ENCODE measurements at regions of chr6 and their contacts with region 1.

Region 1: DNA sequence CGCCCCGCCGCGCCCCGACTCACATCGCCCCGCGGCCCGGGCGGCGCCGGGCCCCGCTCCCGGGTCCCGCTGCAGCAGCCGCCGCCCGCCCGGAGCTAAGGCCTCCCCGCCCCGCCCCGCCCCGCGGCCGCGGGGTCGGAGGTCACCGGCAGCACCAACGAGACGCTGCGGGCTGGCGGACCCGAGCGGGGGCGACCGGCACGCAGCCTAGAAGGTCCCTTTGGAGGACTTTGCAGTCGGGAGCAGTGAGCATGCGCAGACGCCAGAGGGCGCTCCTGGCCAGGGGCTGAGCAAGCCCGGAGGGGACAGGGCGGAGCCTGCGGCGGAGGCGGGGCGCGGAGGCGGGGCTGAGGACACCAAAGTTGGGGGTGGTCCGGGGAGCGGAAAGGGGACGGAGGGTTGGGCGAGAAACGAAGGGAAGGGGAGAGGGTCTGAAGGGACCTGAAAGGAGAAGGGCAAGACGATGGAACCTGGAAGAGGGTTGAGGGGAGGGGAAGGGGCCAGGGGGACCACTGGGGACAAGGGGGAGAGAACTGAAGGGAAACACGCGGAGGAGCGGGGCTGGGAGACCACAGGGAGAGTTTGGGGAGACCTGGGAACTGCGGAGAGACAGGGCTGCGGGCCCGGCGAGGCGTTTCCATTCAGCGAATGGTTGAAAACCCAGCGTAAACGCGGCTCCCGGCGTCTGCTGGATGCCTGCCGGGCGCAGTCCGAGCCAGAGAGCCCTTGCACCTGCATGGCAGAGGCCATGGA is at the start of gene FRS3:
- DNase-seq: peak; percentile 99 to 100
- ATAC-seq: peak; percentile 97 to 98 (median 98)
- H3K4me3 ChIP-seq: peak within 1 kb of the TSS; percentile 91
- H3K27ac ChIP-seq: peak within 1 kb of the TSS; percentile 75
- H3K4me1 ChIP-seq: peaks cover 10% of the 10 kb centered on the region
- H3K27me3 ChIP-seq: no peaks in the 10 kb centered on the region
- CTCF ChIP-seq: peak; percentile 87
- total RNA-seq, gene FRS3: 4.0 to 6.5 (median 5.4) TPM

Region 2: GRCh38 chr6:41367700-41368099 is 412.3 kb before region 1 on chr6:
- intact Hi-C with region 1: loop called in 1 of 2 experiments (anchors 5 kb)
- DNase-seq: no peak
- ATAC-seq: peak in 3 of 4 donors; percentile 36 to 49 (median 46)
- H3K4me3 ChIP-seq: no peak overlapping the region
- H3K27ac ChIP-seq: no peak overlapping the region
- H3K4me1 ChIP-seq: peaks cover 2% of the 10 kb centered on the region
- H3K27me3 ChIP-seq: peaks cover 0 to 79% (median 22%) of the 10 kb centered on the region in 3 donors
- CTCF ChIP-seq: peak; percentile 47

Region 3: DNA sequence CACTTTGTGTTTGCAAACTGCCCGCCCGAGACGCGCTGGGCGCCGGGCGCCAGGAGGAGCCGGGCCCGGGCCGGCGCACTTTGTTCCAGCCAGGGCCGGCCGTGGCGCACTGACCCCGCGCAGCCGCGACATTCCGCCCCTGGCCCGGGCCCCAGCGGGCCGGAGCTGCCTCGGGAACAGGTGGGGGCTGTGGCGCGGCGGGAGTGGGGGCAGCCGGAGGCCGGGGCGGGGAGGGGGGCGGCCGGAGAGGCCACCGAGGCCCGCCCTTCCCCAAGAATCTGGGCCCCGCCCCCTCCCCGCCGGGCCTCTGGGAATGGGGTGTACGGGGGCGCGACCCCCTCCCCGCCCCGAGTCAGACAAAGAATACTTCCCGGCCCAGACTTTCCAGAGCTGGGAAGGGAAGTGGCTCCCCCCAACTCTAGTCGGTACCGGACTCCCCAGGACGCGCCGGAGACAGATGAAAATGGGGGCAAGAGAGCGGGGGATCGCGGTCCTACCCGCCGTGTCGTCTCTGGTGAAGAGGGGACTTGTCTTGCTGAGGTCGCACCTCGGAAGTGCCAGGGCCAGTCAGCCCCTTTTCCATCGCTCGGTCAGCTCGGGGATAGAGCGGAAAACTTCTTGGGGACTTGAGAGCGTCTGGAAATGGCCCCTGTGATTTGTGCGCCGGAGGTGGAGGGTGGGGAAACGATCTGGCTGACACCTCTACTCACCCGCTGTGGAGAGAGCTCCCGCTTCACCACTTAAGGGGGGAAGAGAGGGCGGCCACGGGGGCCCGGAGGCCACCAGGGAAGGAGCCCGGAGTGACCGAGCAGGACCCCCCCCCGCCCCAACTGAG is 232.8 kb before region 1 on chr6:
- intact Hi-C with region 1: no loop called
- DNase-seq: peak; percentile 49 to 72
- ATAC-seq: peak; percentile 34 to 77 (median 74)
- H3K4me3 ChIP-seq: peak overlapping the region; percentile 82
- H3K27ac ChIP-seq: peak overlapping the region; percentile 79
- H3K4me1 ChIP-seq: peaks cover 23% of the 10 kb centered on the region
- H3K27me3 ChIP-seq: no peaks in the 10 kb centered on the region
- CTCF ChIP-seq: no peak

Region 4: DNA sequence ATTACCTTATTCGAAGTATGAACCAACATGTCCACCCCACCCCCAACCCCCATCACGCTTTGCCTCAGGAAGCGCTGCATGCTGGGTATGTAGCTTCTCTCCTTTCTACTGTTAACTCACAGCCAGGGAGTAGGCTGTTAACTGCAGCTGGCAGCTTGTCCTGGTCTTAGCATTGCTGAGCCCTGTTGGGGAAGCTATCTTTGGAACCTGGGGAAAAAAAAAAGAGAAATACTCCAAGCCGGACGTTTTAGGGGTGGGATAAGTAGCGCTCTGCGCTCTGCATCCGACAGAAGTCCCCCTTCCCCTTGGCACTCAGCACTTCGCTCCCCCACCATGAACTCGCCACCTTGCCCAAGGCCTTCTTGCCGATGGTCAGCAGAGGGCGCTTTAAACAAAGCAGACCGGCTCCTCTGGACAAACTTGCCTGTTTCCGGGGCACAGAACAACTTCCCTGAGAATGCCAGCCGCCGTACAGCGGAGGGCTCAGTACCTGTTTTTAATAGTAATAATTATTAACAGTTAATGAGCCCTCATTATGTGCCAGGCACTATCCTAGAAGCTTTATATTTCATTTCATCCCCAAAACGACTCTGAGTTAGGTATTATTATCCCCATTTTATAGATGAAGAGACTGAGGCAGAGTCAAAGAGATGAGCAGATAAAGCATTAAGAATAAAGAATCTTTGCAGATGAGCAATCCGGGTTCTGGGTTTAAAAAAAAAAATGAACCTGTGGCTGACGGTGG is 176.9 kb before region 1 on chr6:
- intact Hi-C with region 1: loop called (anchors 2 to 5 kb)
- DNase-seq: peak; percentile 78 to 84
- ATAC-seq: peak; percentile 75 to 91 (median 81)
- H3K4me3 ChIP-seq: peak overlapping the region; percentile 31
- H3K27ac ChIP-seq: no peak overlapping the region
- H3K4me1 ChIP-seq: peaks cover 4% of the 10 kb centered on the region
- H3K27me3 ChIP-seq: no peaks in the 10 kb centered on the region
- CTCF ChIP-seq: peak; percentile 90

Region 5: GRCh38 chr6:41705996-41706835 is 73.8 kb before region 1 on chr6:
- intact Hi-C with region 1: loop called in 1 of 2 experiments (anchors 10 kb)
- DNase-seq: peak; percentile 87 to 95
- ATAC-seq: peak; percentile 88 to 91 (median 90)
- H3K4me3 ChIP-seq: peak overlapping the region; percentile 37
- H3K27ac ChIP-seq: peak overlapping the region; percentile 85
- H3K4me1 ChIP-seq: peaks cover 89% of the 10 kb centered on the region
- H3K27me3 ChIP-seq: no peaks in the 10 kb centered on the region
- CTCF ChIP-seq: peak; percentile 83

Region 6: DNA sequence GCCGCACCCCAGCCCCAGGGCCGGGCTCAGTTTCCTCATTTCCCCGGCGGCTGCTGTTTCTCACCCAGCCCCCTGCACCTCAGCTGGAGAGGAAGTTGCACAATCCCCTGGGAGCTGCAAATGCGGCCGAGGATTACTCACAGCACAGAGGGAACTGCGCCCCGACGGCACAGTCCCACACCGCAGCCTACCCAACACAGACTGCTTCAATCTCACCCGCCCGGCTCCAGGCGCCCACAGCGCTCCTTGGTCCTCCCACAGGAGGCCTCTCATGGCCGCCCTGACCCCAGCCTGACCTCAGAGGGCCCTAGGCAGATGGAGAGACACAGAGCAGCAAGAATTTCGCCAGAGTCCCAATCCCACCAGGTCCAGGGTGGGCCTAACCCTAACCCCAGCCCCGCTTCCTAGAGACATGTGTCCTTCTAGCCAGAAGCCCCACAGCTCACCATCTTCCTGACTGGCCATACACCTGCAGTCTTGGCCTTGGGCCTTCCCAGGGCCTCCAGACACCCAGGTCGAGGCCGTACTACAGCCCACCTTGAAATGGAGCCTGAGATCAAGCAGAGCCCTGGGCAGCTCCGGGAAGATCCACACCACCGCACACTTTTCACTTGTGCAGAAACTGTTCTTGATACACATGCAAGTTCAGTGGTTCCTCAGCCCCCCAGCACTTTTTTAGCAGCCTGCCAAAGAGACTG is 56.3 kb before region 1 on chr6:
- intact Hi-C with region 1: no loop called
- DNase-seq: peak; percentile 84 to 92
- ATAC-seq: peak; percentile 76 to 86 (median 82)
- H3K4me3 ChIP-seq: peak overlapping the region; percentile 49
- H3K27ac ChIP-seq: peak overlapping the region; percentile 79
- H3K4me1 ChIP-seq: peaks cover 99% of the 10 kb centered on the region
- H3K27me3 ChIP-seq: no peaks in the 10 kb centered on the region
- CTCF ChIP-seq: no peak

Region 7: GRCh38 chr6:41735427-41736356 is 44.3 kb before region 1 on chr6 and contains the start of gene TFEB:
- intact Hi-C with region 1: loop called (anchors 2 to 5 kb)
- DNase-seq: peak; percentile 96 to 97
- ATAC-seq: peak; percentile 65 to 82 (median 78)
- H3K4me3 ChIP-seq: peak within 1 kb of the TSS; percentile 88
- H3K27ac ChIP-seq: peak within 1 kb of the TSS; percentile 96
- H3K4me1 ChIP-seq: peaks cover 27% of the 10 kb centered on the region
- H3K27me3 ChIP-seq: no peaks in the 10 kb centered on the region
- CTCF ChIP-seq: peak; percentile 99
- total RNA-seq, gene TFEB: 35.4 to 64.3 (median 39.8) TPM

Region 8: GRCh38 chr6:42043787-42044475 is 264.0 kb after region 1 on chr6:
- intact Hi-C with region 1: loop called (anchors 1 to 5 kb)
- DNase-seq: peak; percentile 88 to 93
- ATAC-seq: peak; percentile 86 to 93 (median 92)
- H3K4me3 ChIP-seq: peak overlapping the region; percentile 25
- H3K27ac ChIP-seq: no peak overlapping the region
- H3K4me1 ChIP-seq: peaks cover 40% of the 10 kb centered on the region
- H3K27me3 ChIP-seq: peaks cover 0 to 10% (median 0%) of the 10 kb centered on the region in 3 donors
- CTCF ChIP-seq: peak; percentile 99

Measured in psoas muscle (tissue), 8 donors.